Mammary epithelial cell (primary cell): ENCODE measurements at regions of chr19 and their contacts with region 1.

Region 1: GRCh38 chr19:50724522-50725217 is 1.5 kb downstream of the CLEC11A start:
- DNase-seq: peak; percentile 99
- H3K4me3 ChIP-seq: peak overlapping the region; percentile 66 to 82 (median 66)
- H3K27ac ChIP-seq: peak overlapping the region; percentile 39
- H3K4me1 ChIP-seq: peaks cover 25% of the 10 kb centered on the region
- H3K27me3 ChIP-seq: no peaks in the 10 kb centered on the region
- CTCF ChIP-seq: peak; percentile 40 to 64

Region 2: DNA sequence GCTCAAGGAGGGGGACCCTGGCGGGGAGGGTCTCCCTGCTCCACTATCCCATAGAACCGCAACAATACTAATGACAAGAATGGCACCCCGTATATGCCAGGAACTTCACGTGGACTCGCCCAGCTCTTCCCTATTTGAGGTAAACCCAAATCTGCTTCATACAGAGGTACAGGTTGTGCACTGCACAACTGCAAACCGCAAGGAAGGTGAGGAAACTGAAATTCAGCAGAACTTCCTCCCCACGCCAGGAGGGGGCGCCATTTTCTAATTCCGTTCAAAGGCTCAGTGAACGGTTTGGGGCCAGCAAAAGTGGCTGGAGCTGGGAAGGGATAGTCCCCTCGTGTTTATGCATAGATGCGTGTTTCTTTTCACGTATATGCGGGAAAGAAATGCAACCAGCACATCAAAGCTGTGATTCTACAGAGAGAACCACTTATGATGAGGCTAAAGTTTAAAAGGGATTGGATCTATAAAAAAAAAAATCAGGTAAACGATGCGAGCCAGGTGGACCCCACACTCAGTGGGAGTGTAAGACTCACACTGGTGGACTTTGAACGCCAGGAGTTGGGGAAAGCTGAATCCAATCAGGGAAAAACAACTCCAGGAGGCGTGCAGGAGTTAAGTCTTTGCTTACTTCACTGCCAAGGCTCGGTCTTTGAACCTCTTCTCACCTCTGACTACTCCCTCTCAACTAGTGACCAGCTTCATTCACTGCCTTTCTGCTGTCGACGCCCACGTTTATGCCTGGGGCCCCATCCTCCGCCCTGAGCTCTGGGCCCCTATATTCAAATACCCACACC is 55.2 kb before region 1 on chr19:
- CTCF ChIA-PET with region 1: no interaction called
- dilution Hi-C with region 1: loop called (anchors 5 kb)
- in situ Hi-C with region 1: no loop called
- intact Hi-C with region 1: no loop called
- DNase-seq: no peak
- H3K4me3 ChIP-seq: no peak overlapping the region
- H3K27ac ChIP-seq: no peak overlapping the region
- H3K4me1 ChIP-seq: no peaks in the 10 kb centered on the region
- H3K27me3 ChIP-seq: peaks cover 30% of the 10 kb centered on the region
- CTCF ChIP-seq: peak; percentile 78 to 79

Region 3: GRCh38 chr19:50739914-50740426 is 15.3 kb after region 1 on chr19:
- CTCF ChIA-PET with region 1: no interaction called
- dilution Hi-C with region 1: no loop called
- in situ Hi-C with region 1: no loop called
- intact Hi-C with region 1: loop called (anchors 2 kb)
- DNase-seq: no peak
- H3K4me3 ChIP-seq: no peak overlapping the region
- H3K27ac ChIP-seq: no peak overlapping the region
- H3K4me1 ChIP-seq: no peaks in the 10 kb centered on the region
- H3K27me3 ChIP-seq: no peaks in the 10 kb centered on the region
- CTCF ChIP-seq: no peak

Region 4: GRCh38 chr19:50777754-50778303 is 53.2 kb after region 1 on chr19:
- CTCF ChIA-PET with region 1: interaction called, 15 read pairs
- dilution Hi-C with region 1: no loop called
- in situ Hi-C with region 1: loop called in 1 of 2 experiments (anchors 10 kb)
- intact Hi-C with region 1: loop called (anchors 1 kb)
- DNase-seq: peak; percentile 28
- H3K4me3 ChIP-seq: no peak overlapping the region
- H3K27ac ChIP-seq: no peak overlapping the region
- H3K4me1 ChIP-seq: peaks cover 7% of the 10 kb centered on the region
- H3K27me3 ChIP-seq: peaks cover 16% of the 10 kb centered on the region
- CTCF ChIP-seq: no peak

Region 5: GRCh38 chr19:51097166-51097738 is 372.6 kb after region 1 on chr19:
- CTCF ChIA-PET with region 1: no interaction called
- dilution Hi-C with region 1: no loop called
- in situ Hi-C with region 1: no loop called
- intact Hi-C with region 1: loop called (anchors 5 kb)
- DNase-seq: peak; percentile 93
- H3K4me3 ChIP-seq: no peak overlapping the region
- H3K27ac ChIP-seq: no peak overlapping the region
- H3K4me1 ChIP-seq: peaks cover 13% of the 10 kb centered on the region
- H3K27me3 ChIP-seq: no peaks in the 10 kb centered on the region
- CTCF ChIP-seq: peak; percentile 67 to 75